ENCODE measurements at regions of chr18 and their contacts with region 1.

Region 1: GRCh38 chr18:830315-830901 is 18.4 kb upstream of the YES1 start:
- DNase-seq: peak in 3 of 5 donors; percentile 5 to 87 (median 64)
- H3K4me3 ChIP-seq: peak overlapping the region; percentile 18
- H3K4me3 Mint-ChIP-seq: peak overlapping the region; percentile 0 to 67 (median 52)
- H3K27ac ChIP-seq: peak overlapping the region; percentile 0
- H3K27ac Mint-ChIP-seq: peak overlapping the region; percentile 7 to 84 (median 56)
- H3K4me1 ChIP-seq: peaks cover 24% of the 10 kb centered on the region
- H3K4me1 Mint-ChIP-seq: peaks cover 19 to 21% (median 20%) of the 10 kb centered on the region in 3 donors
- H3K27me3 ChIP-seq: no peaks in the 10 kb centered on the region
- H3K27me3 Mint-ChIP-seq: no peaks in the 10 kb centered on the region

Region 2: GRCh38 chr18:623761-624620 is 206.4 kb before region 1 on chr18:
- CTCF ChIA-PET with region 1: interaction called, 11 read pairs
- POLR2A ChIA-PET with region 1: no interaction called
- DNase-seq: peak; percentile 20 to 67 (median 31)
- H3K4me3 ChIP-seq: no peak overlapping the region
- H3K4me3 Mint-ChIP-seq: no peak overlapping the region
- H3K27ac ChIP-seq: no peak overlapping the region
- H3K27ac Mint-ChIP-seq: no peak overlapping the region
- H3K4me1 ChIP-seq: no peaks in the 10 kb centered on the region
- H3K4me1 Mint-ChIP-seq: peaks cover 0 to 2% (median 0%) of the 10 kb centered on the region in 3 donors
- H3K27me3 ChIP-seq: no peaks in the 10 kb centered on the region
- H3K27me3 Mint-ChIP-seq: peaks cover 10 to 24% of the 10 kb centered on the region in 2 donors

Region 3: DNA sequence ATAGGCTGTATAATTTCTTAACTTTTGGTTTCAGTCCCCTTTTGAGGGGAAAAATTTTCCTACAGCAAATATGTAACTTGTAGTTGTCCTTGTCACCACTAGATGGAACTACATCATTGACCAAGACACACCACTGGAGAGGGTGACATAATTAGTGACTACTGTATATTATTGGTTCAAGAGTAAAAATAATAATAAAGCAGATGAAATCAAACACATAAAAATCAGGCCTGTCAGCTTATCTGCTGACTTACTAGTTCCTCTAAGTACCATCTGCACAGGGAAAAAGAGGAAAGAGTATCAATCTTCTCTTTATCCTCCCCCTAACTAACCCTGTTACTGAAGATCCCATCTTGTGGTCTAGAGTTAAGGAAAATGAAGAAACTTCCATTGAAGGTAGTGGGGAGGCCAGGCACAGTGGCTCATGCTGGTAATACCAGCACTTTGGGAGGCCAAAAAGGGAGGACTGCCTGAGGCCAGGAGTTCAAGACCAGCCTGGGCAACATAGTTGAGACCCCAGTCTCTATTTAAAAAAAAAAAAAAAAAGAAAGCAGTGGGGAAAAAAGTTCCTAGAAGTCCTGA is 88.4 kb before region 1 on chr18:
- CTCF ChIA-PET with region 1: interaction called, 143 read pairs
- POLR2A ChIA-PET with region 1: interaction called, 3 read pairs
- DNase-seq: peak in 2 of 5 donors; percentile 40 to 42
- H3K4me3 ChIP-seq: no peak overlapping the region
- H3K4me3 Mint-ChIP-seq: no peak overlapping the region
- H3K27ac ChIP-seq: no peak overlapping the region
- H3K27ac Mint-ChIP-seq: peak overlapping the region in 1 of 8 donors; percentile 58
- H3K4me1 ChIP-seq: no peaks in the 10 kb centered on the region
- H3K4me1 Mint-ChIP-seq: peaks cover 0 to 8% (median 3%) of the 10 kb centered on the region in 3 donors
- H3K27me3 ChIP-seq: no peaks in the 10 kb centered on the region
- H3K27me3 Mint-ChIP-seq: no peaks in the 10 kb centered on the region

Region 4: GRCh38 chr18:778194-778927 is 52.0 kb before region 1 on chr18:
- CTCF ChIA-PET with region 1: interaction called, 17 read pairs
- POLR2A ChIA-PET with region 1: no interaction called
- DNase-seq: no peak
- H3K4me3 ChIP-seq: no peak overlapping the region
- H3K4me3 Mint-ChIP-seq: no peak overlapping the region
- H3K27ac ChIP-seq: no peak overlapping the region
- H3K27ac Mint-ChIP-seq: peak overlapping the region in 1 of 8 donors; percentile 9
- H3K4me1 ChIP-seq: peaks cover 5% of the 10 kb centered on the region
- H3K4me1 Mint-ChIP-seq: peaks cover 44 to 53% (median 44%) of the 10 kb centered on the region in 3 donors
- H3K27me3 ChIP-seq: no peaks in the 10 kb centered on the region
- H3K27me3 Mint-ChIP-seq: no peaks in the 10 kb centered on the region

Region 5: GRCh38 chr18:812376-813171 is 17.8 kb before region 1 on chr18:
- CTCF ChIA-PET with region 1: interaction called, 46 read pairs
- POLR2A ChIA-PET with region 1: interaction called, 8 read pairs
- DNase-seq: peak; percentile 74 to 89 (median 82)
- H3K4me3 ChIP-seq: peak overlapping the region; percentile 67
- H3K4me3 Mint-ChIP-seq: peak overlapping the region; percentile 86 to 97 (median 96)
- H3K27ac ChIP-seq: peak overlapping the region; percentile 82
- H3K27ac Mint-ChIP-seq: peak overlapping the region; percentile 88 to 99 (median 98)
- H3K4me1 ChIP-seq: peaks cover 48% of the 10 kb centered on the region
- H3K4me1 Mint-ChIP-seq: peaks cover 65 to 74% (median 65%) of the 10 kb centered on the region in 3 donors
- H3K27me3 ChIP-seq: no peaks in the 10 kb centered on the region
- H3K27me3 Mint-ChIP-seq: peaks cover 0 to 3% of the 10 kb centered on the region in 2 donors

Region 6: GRCh38 chr18:1227025-1227424 is 396.6 kb after region 1 on chr18:
- CTCF ChIA-PET with region 1: no interaction called
- POLR2A ChIA-PET with region 1: no interaction called
- DNase-seq: no peak
- H3K4me3 ChIP-seq: no peak overlapping the region
- H3K4me3 Mint-ChIP-seq: no peak overlapping the region
- H3K27ac ChIP-seq: no peak overlapping the region
- H3K27ac Mint-ChIP-seq: no peak overlapping the region
- H3K4me1 ChIP-seq: no peaks in the 10 kb centered on the region
- H3K4me1 Mint-ChIP-seq: no peaks in the 10 kb centered on the region
- H3K27me3 ChIP-seq: no peaks in the 10 kb centered on the region
- H3K27me3 Mint-ChIP-seq: no peaks in the 10 kb centered on the region